ENCODE measurements at regions of chrX and their contacts with region 1.

Region 1: DNA sequence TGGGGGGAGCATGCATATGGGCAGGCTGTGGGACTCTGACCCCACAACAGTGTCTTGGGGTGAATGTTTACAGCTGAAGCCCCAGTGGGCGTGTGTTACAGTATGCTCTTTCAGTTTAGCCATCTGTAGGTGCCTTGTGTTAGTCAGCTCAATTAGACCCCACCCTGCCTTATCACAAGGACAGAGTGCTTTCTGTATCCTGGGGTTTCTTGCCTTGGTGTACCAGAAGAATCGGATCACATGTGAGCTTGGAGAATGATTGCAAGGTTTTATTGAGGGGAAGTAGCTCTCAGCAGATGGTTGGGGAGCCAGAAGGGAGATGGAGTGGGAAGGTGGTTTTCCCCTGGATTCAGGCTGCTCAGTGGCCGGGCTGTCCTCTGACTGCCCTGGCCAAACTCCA is 27.3 kb downstream of the SH3BGRL start:
- DNase-seq: no peak

Region 2: DNA sequence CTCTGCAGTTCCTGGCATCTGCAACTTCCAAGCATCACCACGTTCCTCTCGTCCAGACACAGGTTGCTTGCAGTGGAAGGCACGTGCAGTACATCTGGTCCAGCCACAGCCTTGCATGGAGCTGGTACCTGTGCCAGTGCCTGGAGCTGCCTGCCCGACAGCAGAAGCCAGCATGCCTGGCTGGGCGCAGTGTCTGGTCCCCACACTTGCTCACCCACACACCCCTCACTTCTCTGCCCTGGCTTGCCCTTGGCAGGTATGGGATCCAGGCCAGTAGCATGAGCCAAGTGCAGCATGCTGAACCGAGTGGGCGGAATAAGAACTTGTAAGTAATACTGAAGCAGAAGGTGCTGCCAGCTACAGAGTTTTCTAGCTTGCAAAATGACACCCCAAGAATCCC is 12.5 kb after region 1 on chrX:
- intact Hi-C with region 1: loop called (anchors 2 kb)
- DNase-seq: no peak

Region 3: DNA sequence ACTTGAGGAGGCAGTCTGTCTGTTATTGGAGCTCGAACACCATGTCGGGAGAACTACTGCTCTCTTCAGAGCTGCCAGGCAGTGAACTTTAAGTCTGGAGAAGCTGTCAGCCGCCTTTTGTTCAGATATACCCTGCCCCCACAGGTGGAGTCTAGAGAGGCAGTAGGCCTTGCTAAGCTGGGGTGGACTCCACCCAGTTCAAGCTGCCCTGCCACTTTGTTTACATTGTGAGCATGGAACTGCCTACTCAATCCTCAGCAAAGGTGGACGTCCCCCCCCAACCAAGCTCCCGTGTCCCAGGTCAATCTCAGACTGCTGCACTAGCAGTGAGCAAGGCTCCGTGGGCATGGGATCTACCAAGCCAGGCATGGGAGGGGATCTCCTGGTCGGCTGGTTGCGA is 41.5 kb after region 1 on chrX:
- intact Hi-C with region 1: no loop called
- DNase-seq: no peak

Region 4: GRCh38 chrX:81377329-81377728 is 148.1 kb after region 1 on chrX:
- intact Hi-C with region 1: no loop called
- DNase-seq: no peak

Measured in cardiac septum (tissue), 1 donor.